Left cardiac atrium (tissue), 4 donors: ENCODE measurements at regions of chr3 and their contacts with region 1.

Region 1: GRCh38 chr3:195863121-195864006 is 45.0 kb downstream of the TNK2 start:
- DNase-seq: peak; percentile 93
- ATAC-seq: peak; percentile 94

Region 2: DNA sequence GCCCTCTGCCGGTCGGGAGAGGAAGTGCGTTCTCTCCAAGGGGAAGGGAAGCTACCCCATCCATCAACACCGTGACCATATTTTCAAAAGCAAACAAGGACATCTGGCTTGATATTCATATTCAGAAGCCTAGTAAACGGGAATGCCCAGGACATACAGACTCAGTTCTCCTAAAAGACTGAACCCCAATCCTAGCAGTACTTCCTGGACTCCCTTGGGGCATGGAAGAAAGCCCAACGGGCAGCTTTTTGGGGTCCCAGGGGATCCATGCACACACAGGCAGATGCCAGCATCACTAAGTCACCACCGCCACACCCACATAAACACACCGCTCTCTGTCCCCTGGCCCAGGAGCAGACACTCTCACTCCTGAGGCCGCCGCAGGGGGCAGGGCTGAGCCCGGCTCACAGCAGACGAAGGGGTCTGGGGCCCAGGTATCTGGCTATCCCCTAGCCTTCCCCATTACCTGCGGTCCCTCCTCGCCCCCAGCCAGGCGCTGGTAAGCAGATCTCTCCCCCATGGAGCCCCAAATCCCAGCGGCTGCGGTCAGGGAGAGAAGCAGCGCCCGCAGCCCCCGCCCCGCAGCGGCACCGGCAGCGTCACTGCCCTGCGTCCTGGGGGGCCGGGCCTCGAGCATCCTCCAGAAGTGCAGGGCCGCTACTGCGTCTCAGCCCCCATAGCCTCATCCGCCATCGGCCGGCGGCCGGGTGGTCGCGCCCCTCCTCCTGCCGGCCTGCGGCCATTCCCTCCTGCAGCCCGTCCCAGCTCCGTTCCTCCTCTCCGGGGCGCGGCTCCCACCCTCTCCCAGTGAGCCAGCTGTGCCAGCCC is 31.6 kb after region 1 on chr3:
- intact Hi-C with region 1: loop called (anchors 1 to 5 kb)
- DNase-seq: peak; percentile 48
- ATAC-seq: peak; percentile 17 to 36

Region 3: GRCh38 chr3:195909644-195910508 is 46.5 kb after region 1 on chr3:
- intact Hi-C with region 1: loop called (anchors 2 to 5 kb)
- DNase-seq: peak; percentile 87
- ATAC-seq: peak; percentile 78 to 79